Activated CD4-positive, alpha-beta T cell treated with anti-CD3 and anti-CD28 coated beads for 36 hours (primary cell): ENCODE measurements at regions of chr1 and their contacts with region 1.

Region 1: GRCh38 chr1:234114648-234115307 is 210.3 kb downstream of the SLC35F3 start:
- DNase-seq: peak; percentile 42
- ATAC-seq: peak; percentile 55
- H3K4me3 Mint-ChIP-seq: peak overlapping the region; percentile 30
- H3K27ac Mint-ChIP-seq: no peak overlapping the region
- H3K4me1 Mint-ChIP-seq: peaks cover 5% of the 10 kb centered on the region
- H3K27me3 Mint-ChIP-seq: peaks cover 12% of the 10 kb centered on the region

Region 2: GRCh38 chr1:233269656-233270055 is 845.1 kb before region 1 on chr1:
- CTCF ChIA-PET with region 1: no interaction called
- POLR2A ChIA-PET with region 1: no interaction called
- intact Hi-C with region 1: no loop called
- DNase-seq: no peak
- ATAC-seq: peak; percentile 54
- H3K4me3 Mint-ChIP-seq: no peak overlapping the region
- H3K27ac Mint-ChIP-seq: no peak overlapping the region
- H3K4me1 Mint-ChIP-seq: peaks cover 31% of the 10 kb centered on the region
- H3K27me3 Mint-ChIP-seq: no peaks in the 10 kb centered on the region

Region 3: GRCh38 chr1:234125283-234125682 is 10.5 kb after region 1 on chr1:
- CTCF ChIA-PET with region 1: interaction called, 21 read pairs
- POLR2A ChIA-PET with region 1: no interaction called
- intact Hi-C with region 1: no loop called
- DNase-seq: peak; percentile 73
- ATAC-seq: peak; percentile 73
- H3K4me3 Mint-ChIP-seq: no peak overlapping the region
- H3K27ac Mint-ChIP-seq: no peak overlapping the region
- H3K4me1 Mint-ChIP-seq: no peaks in the 10 kb centered on the region
- H3K27me3 Mint-ChIP-seq: peaks cover 27% of the 10 kb centered on the region

Region 4: DNA sequence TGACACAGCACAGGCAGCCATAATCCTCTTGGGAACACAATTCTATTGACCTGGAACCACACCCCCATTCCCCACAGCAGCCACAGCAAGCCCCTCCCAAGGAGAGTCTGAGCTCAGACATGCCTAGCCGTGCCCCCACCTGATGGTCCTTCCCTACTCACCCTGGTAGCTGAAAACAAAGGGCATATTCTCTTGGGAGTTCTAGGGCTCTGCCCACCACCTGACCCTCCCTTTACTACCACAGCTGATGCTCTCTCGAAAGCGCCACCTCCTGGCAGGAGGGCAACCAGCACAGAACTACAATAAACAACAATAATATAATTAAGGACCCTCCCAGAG is 73.6 kb after region 1 on chr1:
- CTCF ChIA-PET with region 1: interaction called, 5 read pairs
- POLR2A ChIA-PET with region 1: no interaction called
- intact Hi-C with region 1: loop called in 1 of 2 experiments (anchors 2 kb)
- DNase-seq: peak; percentile 37
- ATAC-seq: no peak
- H3K4me3 Mint-ChIP-seq: no peak overlapping the region
- H3K27ac Mint-ChIP-seq: no peak overlapping the region
- H3K4me1 Mint-ChIP-seq: no peaks in the 10 kb centered on the region
- H3K27me3 Mint-ChIP-seq: peaks cover 39% of the 10 kb centered on the region

Region 5: DNA sequence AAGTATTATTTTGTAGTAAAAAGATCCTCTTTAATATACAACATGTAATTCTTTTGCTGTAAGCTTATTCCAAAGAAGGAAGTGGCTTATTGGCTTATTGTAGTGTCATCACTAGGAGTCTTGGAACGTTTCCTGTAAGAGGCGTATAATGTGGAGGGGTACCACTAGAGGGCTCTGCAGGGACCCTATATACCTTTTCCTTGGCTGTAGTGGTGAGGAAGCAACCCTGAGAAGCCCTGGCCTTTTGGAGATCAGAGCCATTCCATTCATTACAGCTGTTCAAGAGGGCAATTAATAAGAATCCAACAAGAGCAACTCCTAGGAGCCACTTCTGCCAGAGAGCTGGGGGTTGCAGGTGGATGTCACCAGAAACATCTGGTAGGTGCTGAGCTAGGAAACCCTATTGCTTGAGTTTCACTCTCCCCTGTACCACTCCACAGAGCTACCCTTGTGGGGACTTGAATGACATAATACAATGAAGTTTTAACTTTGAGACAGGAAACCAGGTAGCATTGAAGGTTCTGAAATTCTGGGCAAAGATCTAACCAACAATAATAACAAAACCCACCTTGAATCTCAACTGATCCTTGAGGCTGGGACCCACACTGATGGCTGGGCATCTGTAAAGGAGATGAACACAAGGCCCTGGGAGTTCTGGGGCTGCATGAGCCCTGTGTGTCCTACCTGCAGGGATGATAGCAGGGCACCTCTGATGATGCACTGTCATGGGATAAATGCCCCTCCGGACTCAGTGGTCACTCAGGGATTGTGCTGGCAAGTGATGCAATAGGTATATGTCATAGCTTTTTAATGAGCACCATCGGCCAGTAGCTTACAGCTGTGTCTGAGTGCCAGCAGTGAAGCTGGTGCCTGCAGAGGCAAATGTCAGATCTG is 98.2 kb after region 1 on chr1:
- CTCF ChIA-PET with region 1: interaction called, 20 read pairs
- POLR2A ChIA-PET with region 1: no interaction called
- intact Hi-C with region 1: no loop called
- DNase-seq: peak; percentile 47
- ATAC-seq: peak; percentile 65
- H3K4me3 Mint-ChIP-seq: no peak overlapping the region
- H3K27ac Mint-ChIP-seq: no peak overlapping the region
- H3K4me1 Mint-ChIP-seq: peaks cover 21% of the 10 kb centered on the region
- H3K27me3 Mint-ChIP-seq: peaks cover 31% of the 10 kb centered on the region

Region 6: GRCh38 chr1:235093696-235094592 is 979.2 kb after region 1 on chr1:
- CTCF ChIA-PET with region 1: no interaction called
- POLR2A ChIA-PET with region 1: no interaction called
- intact Hi-C with region 1: loop called in 1 of 2 experiments (anchors 10 kb)
- DNase-seq: peak; percentile 92
- ATAC-seq: peak; percentile 97
- H3K4me3 Mint-ChIP-seq: no peak overlapping the region
- H3K27ac Mint-ChIP-seq: no peak overlapping the region
- H3K4me1 Mint-ChIP-seq: peaks cover 8% of the 10 kb centered on the region
- H3K27me3 Mint-ChIP-seq: peaks cover 3% of the 10 kb centered on the region